Right lobe of liver (tissue), 6 donors: ENCODE measurements at regions of chr19 and their contacts with region 1.

Region 1: GRCh38 chr19:46840136-46840942 is 10.3 kb downstream of the AP2S1 start:
- DNase-seq: no peak
- ATAC-seq: peak; percentile 58 to 81 (median 70)
- H3K4me3 ChIP-seq: no peak overlapping the region
- H3K27ac ChIP-seq: no peak overlapping the region
- H3K4me1 ChIP-seq: peaks cover 0 to 9% (median 2%) of the 10 kb centered on the region in 4 donors
- H3K27me3 ChIP-seq: no peaks in the 10 kb centered on the region
- CTCF ChIP-seq: peak; percentile 73 to 85 (median 80)
- POLR2A ChIP-seq: no peak

Region 2: DNA sequence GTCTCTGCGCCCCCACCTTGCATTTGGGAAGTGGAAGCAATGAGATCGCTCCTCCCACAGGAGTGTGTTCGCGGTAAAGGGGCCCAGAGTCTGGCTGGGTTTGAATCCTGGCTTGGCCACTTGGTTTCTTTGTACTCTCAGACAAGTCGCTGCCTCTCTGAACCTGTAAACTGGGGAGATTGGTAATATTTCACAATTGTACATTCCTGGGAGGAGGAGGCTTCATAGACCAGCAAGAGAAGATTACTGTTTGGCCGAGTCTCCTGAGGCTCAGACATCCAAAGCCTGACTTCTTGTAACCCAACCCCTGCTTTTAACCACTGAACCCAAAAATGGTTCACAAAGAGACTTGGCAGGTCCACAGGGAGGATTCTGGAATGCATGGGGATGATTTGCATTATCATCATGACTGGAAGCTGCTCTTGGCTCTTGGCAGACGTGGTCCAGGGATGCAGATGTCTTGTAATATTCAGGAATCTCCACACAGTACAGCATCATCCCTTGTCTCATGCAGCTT is 80.5 kb before region 1 on chr19:
- intact Hi-C with region 1: loop called (anchors 5 kb)
- DNase-seq: no peak
- ATAC-seq: no peak
- H3K4me3 ChIP-seq: no peak overlapping the region
- H3K27ac ChIP-seq: no peak overlapping the region
- H3K4me1 ChIP-seq: peaks cover 0 to 12% (median 0%) of the 10 kb centered on the region in 4 donors
- H3K27me3 ChIP-seq: no peaks in the 10 kb centered on the region
- CTCF ChIP-seq: no peak
- POLR2A ChIP-seq: no peak